Aorta (tissue), 5 donors: ENCODE measurements at regions of chr9 and their contacts with region 1.

Region 1: DNA sequence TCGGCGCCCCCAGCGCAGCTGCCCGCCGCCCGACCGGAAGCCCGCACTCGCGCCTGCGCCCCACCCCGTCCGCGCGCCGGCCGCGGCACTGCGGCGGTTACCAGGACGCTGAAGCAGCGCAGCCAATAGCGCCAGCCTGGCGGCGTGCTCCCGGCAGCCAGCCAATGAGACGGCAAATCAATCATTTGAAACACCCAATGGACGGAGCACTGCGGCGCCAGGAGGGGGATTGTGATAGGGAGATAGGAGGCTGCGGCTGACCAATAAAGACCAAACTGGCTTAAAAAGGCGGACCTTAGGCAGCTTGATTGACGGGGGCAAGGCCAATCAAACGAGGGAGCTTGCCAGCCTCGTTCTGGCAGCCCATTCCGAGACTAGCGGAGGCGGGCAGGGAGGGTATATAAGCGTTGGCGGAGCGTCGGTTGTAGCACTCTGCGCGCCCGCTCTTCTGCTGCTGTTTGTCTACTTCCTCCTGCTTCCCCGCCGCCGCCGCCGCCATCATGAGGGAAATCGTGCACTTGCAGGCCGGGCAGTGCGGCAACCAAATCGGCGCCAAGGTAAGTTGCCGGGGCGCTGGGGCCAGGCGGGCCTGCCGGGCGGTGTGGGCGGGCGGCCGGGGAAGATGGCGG is at the start of gene TUBB4B:
- DNase-seq: peak; percentile 99 to 100
- ATAC-seq: peak; percentile 95
- H3K4me3 ChIP-seq: peak within 1 kb of the TSS; percentile 65 to 86
- H3K27ac ChIP-seq: peak within 1 kb of the TSS in 1 of 2 donors; percentile 76
- H3K4me1 ChIP-seq: no peaks in the 10 kb centered on the region
- H3K27me3 ChIP-seq: peaks cover 0 to 2% of the 10 kb centered on the region in 2 donors
- total RNA-seq, gene TUBB4B: 86.9 to 152 TPM

Region 2: DNA sequence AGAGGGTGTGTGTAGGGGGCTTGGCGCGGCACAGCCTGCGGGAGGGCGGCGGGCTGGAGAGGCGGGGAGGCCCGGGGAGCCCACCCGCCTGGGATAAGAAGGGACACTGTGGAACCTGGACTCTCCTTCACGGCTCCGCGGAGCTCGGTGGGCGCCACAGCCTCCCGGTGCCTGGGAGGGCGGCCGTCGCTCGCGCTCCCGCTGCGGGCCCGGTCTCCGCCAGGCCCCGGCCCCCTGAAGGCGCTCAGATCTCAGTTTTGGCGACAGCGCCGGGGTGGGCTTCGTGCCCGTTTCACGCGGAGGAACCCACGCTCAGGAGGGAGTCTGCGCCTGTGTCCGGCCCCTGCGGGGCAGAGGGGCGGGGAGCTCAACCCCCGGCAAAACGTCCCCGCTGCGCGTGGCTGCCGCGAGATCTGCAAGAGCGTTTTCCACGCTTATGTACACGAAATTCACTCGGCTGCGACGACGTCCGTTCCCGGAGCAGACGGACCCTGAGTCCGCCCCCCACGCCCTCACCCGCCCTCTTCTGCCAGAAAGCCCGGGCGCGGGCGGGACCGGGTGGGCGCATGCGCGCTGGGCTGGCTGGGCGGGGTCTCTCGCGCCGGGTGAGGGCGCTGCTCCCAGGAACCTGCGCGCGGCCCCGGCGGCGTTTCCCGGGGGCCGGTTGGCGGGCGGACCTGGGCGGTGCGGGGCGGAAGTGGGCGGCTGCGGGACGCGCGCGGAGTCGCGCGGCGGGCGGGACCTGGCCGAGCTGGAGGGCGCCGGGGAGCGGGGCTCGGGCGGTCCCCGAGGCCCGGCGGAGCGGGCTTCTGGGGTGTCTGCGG is 13.9 kb after region 1 on chr9 and contains the start of gene NELFB:
- intact Hi-C with region 1: loop called in 1 of 2 experiments (anchors 2 kb)
- DNase-seq: peak; percentile 95 to 99
- ATAC-seq: peak; percentile 90
- H3K4me3 ChIP-seq: peak within 1 kb of the TSS; percentile 87 to 89
- H3K27ac ChIP-seq: peak within 1 kb of the TSS in 1 of 2 donors; percentile 10
- H3K4me1 ChIP-seq: no peaks in the 10 kb centered on the region
- H3K27me3 ChIP-seq: no peaks in the 10 kb centered on the region
- total RNA-seq, gene NELFB: 35.5 to 40.9 TPM

Region 3: GRCh38 chr9:137339045-137339907 is 98.3 kb after region 1 on chr9:
- intact Hi-C with region 1: no loop called
- DNase-seq: no peak
- ATAC-seq: no peak
- H3K4me3 ChIP-seq: no peak overlapping the region
- H3K27ac ChIP-seq: no peak overlapping the region
- H3K4me1 ChIP-seq: no peaks in the 10 kb centered on the region
- H3K27me3 ChIP-seq: no peaks in the 10 kb centered on the region